ENCODE measurements at regions of chr15 and their contacts with region 1.

Region 1: DNA sequence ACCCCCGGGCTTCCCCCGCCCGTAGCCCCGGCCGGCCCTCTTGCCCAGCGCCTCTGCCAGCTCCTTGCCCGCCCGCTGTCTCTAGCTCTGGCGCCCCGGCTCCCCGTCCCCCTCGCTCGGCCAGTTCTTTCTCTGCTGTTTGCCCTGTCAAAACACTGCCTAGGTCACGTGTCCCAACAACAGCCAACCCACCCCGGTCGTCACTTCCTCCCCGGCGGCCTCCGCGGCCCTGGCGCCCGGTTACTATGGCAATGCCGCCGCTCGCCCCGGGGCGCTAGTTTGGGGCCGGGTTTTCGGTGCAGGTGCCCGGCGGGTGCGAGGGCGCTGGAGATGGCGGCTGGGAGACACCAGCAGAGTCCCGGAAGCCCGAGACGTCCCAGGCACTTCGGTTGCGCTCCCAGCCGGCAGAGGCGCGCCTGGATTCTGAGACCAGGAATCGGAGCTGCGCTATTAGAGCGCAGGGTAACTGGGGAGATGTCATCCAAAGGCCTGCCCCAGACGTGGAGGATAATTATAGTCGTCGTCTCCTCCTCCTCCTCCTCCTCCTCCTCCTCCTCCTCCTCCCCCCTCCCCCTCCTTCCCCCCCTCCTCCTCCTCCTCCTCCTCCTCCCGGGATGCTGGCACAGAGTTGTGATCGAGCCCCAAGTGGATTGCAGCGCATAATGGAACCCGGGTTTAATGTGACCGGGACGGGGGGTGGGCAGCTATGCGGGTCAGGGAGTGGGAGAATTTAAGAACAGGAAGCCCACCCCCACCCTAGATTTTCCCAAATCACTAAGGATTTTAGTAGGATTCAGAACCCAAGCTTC is at the start of gene ATOSA:
- DNase-seq: peak; percentile 92
- ATAC-seq: peak; percentile 58
- H3K4me3 Mint-ChIP-seq: peak within 1 kb of the TSS; percentile 100
- H3K27ac Mint-ChIP-seq: peak within 1 kb of the TSS; percentile 98
- H3K4me1 Mint-ChIP-seq: peaks cover 77% of the 10 kb centered on the region
- H3K27me3 Mint-ChIP-seq: no peaks in the 10 kb centered on the region
- CTCF ChIP-seq: no peak
- total RNA-seq, gene ATOSA: 73.8 and 96.8 TPM in 2 replicates

Region 2: GRCh38 chr15:51731549-51732267 is 947.7 kb before region 1 on chr15:
- CTCF ChIA-PET with region 1: no interaction called
- POLR2A ChIA-PET with region 1: no interaction called
- intact Hi-C with region 1: loop called (anchors 5 kb)
- DNase-seq: peak; percentile 44
- ATAC-seq: peak; percentile 61
- H3K4me3 Mint-ChIP-seq: peak overlapping the region; percentile 80
- H3K27ac Mint-ChIP-seq: peak overlapping the region; percentile 93
- H3K4me1 Mint-ChIP-seq: peaks cover 94% of the 10 kb centered on the region
- H3K27me3 Mint-ChIP-seq: no peaks in the 10 kb centered on the region
- CTCF ChIP-seq: no peak

Region 3: DNA sequence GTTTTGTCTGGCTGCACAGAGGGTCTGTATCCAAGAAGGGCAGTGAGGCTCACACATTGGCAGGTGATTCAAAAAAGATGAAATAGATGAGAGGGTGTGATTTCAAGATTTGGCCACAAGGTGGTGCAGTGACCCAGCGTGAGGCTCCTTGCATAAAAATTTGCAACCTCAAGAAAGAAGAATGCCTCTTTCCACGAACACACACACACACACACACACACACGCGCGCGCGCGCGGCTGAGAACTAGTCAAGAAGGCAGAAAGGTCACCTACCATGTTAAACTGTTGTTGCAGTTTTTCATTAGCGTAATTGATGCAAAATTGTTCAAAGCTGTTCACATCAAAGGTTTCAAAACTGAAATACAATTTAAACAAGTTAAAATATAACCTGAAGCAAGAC is 423.1 kb before region 1 on chr15:
- CTCF ChIA-PET with region 1: interaction called, 3 read pairs
- POLR2A ChIA-PET with region 1: interaction called, 4 read pairs
- intact Hi-C with region 1: loop called (anchors 2 kb)
- DNase-seq: peak; percentile 46
- ATAC-seq: peak; percentile 78
- H3K4me3 Mint-ChIP-seq: peak overlapping the region; percentile 60
- H3K27ac Mint-ChIP-seq: peak overlapping the region; percentile 68
- H3K4me1 Mint-ChIP-seq: peaks cover 48% of the 10 kb centered on the region
- H3K27me3 Mint-ChIP-seq: no peaks in the 10 kb centered on the region
- CTCF ChIP-seq: no peak

Region 4: DNA sequence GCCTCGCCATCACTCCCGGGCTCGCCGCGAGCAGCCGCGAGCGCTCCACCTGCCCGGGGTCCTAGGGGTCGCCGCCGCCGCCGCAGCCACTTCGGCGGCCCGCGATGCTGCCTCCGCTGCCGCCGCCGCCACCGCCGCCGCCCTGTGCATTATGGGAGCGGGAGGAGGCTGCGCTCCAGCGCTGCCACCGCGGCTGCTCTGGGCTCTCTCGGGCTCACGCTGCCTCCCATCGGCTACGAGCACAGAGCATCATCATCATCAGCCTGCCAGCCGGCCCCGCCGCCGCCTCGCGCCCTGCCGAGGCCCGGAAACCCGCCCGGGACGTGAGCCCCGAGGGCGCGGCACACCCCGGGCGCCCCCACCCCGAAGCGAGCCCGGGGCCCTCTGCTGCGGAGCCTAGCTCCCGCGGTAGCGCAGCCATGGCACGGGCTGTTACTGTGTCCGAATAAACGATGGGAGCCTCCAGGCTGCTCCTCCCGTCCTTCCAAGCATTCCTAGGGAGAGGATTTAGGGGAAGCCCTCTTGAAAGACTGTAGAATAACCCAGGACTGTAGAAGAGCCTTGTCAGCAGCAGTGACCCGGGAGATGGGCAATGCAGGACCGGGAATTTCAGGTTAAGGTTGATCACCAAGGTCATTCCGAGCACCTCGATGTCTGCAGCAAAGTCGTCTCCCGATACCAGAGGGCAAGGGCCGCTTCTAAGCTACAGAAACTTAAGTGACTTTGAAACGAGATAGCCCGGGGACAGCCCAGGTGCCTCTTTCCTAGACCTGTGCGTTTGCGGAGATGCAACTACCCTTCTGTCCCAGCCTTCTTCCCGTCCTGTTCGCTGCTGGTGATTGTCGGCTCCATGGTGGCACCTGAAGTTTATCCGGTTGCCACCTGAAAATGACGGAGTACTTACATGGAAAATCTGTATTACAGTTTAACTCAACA is 150.2 kb before region 1 on chr15:
- CTCF ChIA-PET with region 1: no interaction called
- POLR2A ChIA-PET with region 1: interaction called, 12 read pairs
- intact Hi-C with region 1: loop called (anchors 1 kb)
- DNase-seq: no peak
- ATAC-seq: peak; percentile 79
- H3K4me3 Mint-ChIP-seq: peak overlapping the region; percentile 73
- H3K27ac Mint-ChIP-seq: peak overlapping the region; percentile 79
- H3K4me1 Mint-ChIP-seq: peaks cover 23% of the 10 kb centered on the region
- H3K27me3 Mint-ChIP-seq: no peaks in the 10 kb centered on the region
- CTCF ChIP-seq: no peak

Region 5: GRCh38 chr15:52661909-52662308 is 17.5 kb before region 1 on chr15:
- CTCF ChIA-PET with region 1: interaction called, 3 read pairs
- POLR2A ChIA-PET with region 1: interaction called, 9 read pairs
- intact Hi-C with region 1: loop called (anchors 2 kb)
- DNase-seq: no peak
- ATAC-seq: no peak
- H3K4me3 Mint-ChIP-seq: no peak overlapping the region
- H3K27ac Mint-ChIP-seq: no peak overlapping the region
- H3K4me1 Mint-ChIP-seq: peaks cover 21% of the 10 kb centered on the region
- H3K27me3 Mint-ChIP-seq: no peaks in the 10 kb centered on the region
- CTCF ChIP-seq: no peak

Region 6: GRCh38 chr15:52730173-52730572 is 50.7 kb after region 1 on chr15:
- CTCF ChIA-PET with region 1: interaction called, 7 read pairs
- POLR2A ChIA-PET with region 1: interaction called, 18 read pairs
- intact Hi-C with region 1: loop called (anchors 1 kb)
- DNase-seq: no peak
- ATAC-seq: peak; percentile 91
- H3K4me3 Mint-ChIP-seq: peak overlapping the region; percentile 39
- H3K27ac Mint-ChIP-seq: peak overlapping the region; percentile 89
- H3K4me1 Mint-ChIP-seq: peaks cover 40% of the 10 kb centered on the region
- H3K27me3 Mint-ChIP-seq: no peaks in the 10 kb centered on the region
- CTCF ChIP-seq: no peak

Measured in activated B cell treated with CpG ODN at 0.5 μM for 24 hours (primary cell).